ENCODE measurements at regions of chr6 and their contacts with region 1.

Region 1: GRCh38 chr6:30102970-30103874 is 9.7 kb downstream of the TRIM31 start:
- DNase-seq: peak; percentile 90
- ATAC-seq: peak; percentile 68
- H3K4me3 ChIP-seq: peak overlapping the region; percentile 63 to 77 (median 63)
- H3K27ac ChIP-seq: peak overlapping the region; percentile 79
- H3K4me1 ChIP-seq: peaks cover 56% of the 10 kb centered on the region
- H3K27me3 ChIP-seq: no peaks in the 10 kb centered on the region; a peak in 1 of 5 replicates
- CTCF ChIP-seq: peak; percentile 99
- EP300 ChIP-seq: no peak; a peak in 1 of 4 replicates
- POLR2A ChIP-seq: peak; percentile 42 to 79; a peak in 3 of 4 replicates
- RAD21 ChIP-seq: peak; percentile 96

Region 2: DNA sequence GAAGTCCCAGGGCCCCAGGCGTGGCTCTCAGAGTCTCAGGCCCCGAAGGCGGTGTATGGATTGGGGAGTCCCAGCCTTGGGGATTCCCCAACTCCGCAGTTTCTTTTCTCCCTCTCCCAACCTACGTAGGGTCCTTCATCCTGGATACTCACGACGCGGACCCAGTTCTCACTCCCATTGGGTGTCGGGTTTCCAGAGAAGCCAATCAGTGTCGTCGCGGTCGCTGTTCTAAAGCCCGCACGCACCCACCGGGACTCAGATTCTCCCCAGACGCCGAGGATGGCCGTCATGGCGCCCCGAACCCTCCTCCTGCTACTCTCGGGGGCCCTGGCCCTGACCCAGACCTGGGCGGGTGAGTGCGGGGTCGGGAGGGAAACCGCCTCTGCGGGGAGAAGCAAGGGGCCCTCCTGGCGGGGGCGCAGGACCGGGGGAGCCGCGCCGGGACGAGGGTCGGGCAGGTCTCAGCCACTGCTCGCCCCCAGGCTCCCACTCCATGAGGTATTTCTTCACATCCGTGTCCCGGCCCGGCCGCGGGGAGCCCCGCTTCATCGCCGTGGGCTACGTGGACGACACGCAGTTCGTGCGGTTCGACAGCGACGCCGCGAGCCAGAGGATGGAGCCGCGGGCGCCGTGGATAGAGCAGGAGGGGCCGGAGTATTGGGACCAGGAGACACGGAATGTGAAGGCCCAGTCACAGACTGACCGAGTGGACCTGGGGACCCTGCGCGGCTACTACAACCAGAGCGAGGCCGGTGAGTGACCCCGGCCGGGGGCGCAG is 160.8 kb before region 1 on chr6 and contains the start of gene HLA-A:
- CTCF ChIA-PET with region 1: no interaction called
- POLR2A ChIA-PET with region 1: no interaction called
- in situ Hi-C with region 1: no loop called
- intact Hi-C with region 1: loop called (anchors 1 kb)
- DNase-seq: peak; percentile 94
- ATAC-seq: peak; percentile 98
- H3K4me3 ChIP-seq: peak within 1 kb of the TSS; percentile 77 to 82 (median 80)
- H3K27ac ChIP-seq: peak within 1 kb of the TSS; percentile 60
- H3K4me1 ChIP-seq: peaks cover 28% of the 10 kb centered on the region
- H3K27me3 ChIP-seq: no peaks in the 10 kb centered on the region
- CTCF ChIP-seq: no peak
- EP300 ChIP-seq: no peak
- POLR2A ChIP-seq: peak; percentile 87 to 90
- RAD21 ChIP-seq: no peak
- total RNA-seq, gene HLA-A: 131 and 345 TPM in 2 replicates

Region 3: DNA sequence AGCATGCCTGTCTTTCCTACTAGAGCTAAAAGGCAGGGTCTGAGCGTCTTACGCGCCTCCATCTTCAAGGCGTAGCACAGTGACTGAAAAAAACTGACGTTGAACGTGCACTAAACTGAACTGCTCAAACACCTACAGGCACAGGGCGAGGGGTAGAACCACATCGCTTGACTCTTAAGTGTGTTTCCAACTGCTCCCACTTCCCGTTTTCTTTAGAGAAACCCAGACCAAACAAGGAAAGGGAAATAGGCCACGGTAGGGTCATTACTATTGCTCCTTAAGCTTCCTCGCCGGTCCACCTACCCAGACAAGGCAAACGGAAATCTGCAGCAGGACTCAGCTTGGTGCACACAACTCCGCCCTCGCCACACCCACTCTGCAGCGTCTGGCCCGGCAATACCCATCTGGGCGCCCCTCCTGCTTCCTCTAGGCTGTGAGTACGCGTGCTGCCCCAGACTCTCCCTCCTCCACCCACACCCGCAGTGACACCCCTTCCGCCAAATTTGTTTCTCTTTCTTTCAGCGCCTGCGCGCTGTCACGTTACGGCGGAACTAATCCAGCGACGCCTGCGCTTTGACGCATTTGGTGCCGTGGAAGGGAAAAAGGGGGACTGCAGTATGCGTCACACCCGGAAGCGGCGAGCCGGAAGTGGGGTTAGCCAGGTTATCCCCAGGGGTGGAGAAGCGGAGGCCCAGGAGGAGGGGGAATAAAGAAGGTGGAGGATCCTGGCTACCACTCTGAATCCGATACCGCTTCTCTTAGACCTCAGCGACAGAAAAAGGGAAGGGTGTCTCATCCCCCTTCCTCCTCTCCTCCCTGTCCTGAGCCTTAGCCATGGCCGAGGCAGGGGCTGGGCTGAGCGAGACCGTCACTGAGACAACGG is 36.4 kb before region 1 on chr6 and contains the start of gene PPP1R11:
- CTCF ChIA-PET with region 1: no interaction called
- POLR2A ChIA-PET with region 1: interaction called, 35 read pairs
- in situ Hi-C with region 1: no loop called
- intact Hi-C with region 1: loop called (anchors 2 kb)
- DNase-seq: peak; percentile 99
- ATAC-seq: peak; percentile 99
- H3K4me3 ChIP-seq: peak within 1 kb of the TSS; percentile 70 to 82 (median 75)
- H3K27ac ChIP-seq: peak within 1 kb of the TSS; percentile 66
- H3K4me1 ChIP-seq: peaks cover 36% of the 10 kb centered on the region
- H3K27me3 ChIP-seq: no peaks in the 10 kb centered on the region; a peak in 1 of 5 replicates
- CTCF ChIP-seq: no peak
- EP300 ChIP-seq: no peak; a peak in 1 of 4 replicates
- POLR2A ChIP-seq: peak; percentile 65 to 85
- RAD21 ChIP-seq: peak; percentile 3; the same call in 1 of the 2 replicates
- total RNA-seq, gene PPP1R11: 32.1 and 33.1 TPM in 2 replicates

Region 4: DNA sequence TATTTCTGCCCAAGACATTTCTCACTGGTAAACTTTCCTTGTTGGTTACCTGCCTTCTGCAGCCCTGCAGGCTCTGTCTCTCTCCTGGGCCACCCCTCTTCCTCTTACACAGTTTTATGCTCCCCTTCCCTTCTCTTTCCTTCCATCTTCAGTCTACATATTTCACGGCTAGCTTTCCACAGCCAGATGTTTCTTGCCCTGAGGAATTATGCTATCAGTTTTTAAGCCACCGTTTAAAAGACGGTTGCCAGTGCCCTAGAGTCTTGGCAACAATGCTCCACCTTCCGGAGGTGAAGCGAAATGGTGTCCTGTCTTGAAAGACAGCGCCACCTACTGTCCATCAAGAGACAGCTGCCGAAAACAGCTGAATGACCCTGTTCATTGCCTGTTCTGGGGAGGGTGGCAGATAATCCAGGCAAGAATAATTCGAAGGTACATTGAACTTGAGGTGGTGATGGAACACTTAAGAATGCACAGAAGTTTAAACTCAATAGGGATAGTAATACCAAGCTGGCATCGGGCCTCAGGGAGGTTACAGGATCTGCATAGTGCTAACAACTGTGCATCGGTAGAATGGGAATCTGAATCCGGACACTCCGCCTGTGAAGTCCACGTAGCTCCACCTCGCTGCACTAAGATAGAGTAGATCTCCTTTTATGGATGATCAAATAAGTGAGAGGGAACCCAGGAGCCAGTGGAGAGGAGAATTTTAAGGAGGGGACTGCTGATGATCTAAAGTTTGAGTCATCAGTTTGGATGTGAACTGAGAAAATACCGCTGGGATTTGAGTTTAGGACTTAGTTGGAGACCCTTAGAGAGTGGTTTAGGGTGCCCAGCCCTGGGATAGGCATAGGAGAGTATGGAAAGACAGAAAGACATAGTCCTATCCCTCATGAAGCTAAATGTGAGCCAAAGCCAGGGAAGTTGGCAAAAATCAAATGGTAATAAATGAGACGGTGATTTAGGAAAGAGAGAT is 28.0 kb after region 1 on chr6:
- CTCF ChIA-PET with region 1: interaction called, 140 read pairs
- POLR2A ChIA-PET with region 1: interaction called, 43 read pairs
- in situ Hi-C with region 1: no loop called
- intact Hi-C with region 1: loop called (anchors 1 kb)
- DNase-seq: peak; percentile 89
- ATAC-seq: peak; percentile 70
- H3K4me3 ChIP-seq: peak overlapping the region in 1 of 3 experiments; percentile 28; a peak in 2 of 6 replicates
- H3K27ac ChIP-seq: no peak overlapping the region
- H3K4me1 ChIP-seq: peaks cover 75% of the 10 kb centered on the region
- H3K27me3 ChIP-seq: no peaks in the 10 kb centered on the region
- CTCF ChIP-seq: peak; percentile 100
- EP300 ChIP-seq: no peak
- POLR2A ChIP-seq: no peak
- RAD21 ChIP-seq: peak; percentile 90

Region 5: DNA sequence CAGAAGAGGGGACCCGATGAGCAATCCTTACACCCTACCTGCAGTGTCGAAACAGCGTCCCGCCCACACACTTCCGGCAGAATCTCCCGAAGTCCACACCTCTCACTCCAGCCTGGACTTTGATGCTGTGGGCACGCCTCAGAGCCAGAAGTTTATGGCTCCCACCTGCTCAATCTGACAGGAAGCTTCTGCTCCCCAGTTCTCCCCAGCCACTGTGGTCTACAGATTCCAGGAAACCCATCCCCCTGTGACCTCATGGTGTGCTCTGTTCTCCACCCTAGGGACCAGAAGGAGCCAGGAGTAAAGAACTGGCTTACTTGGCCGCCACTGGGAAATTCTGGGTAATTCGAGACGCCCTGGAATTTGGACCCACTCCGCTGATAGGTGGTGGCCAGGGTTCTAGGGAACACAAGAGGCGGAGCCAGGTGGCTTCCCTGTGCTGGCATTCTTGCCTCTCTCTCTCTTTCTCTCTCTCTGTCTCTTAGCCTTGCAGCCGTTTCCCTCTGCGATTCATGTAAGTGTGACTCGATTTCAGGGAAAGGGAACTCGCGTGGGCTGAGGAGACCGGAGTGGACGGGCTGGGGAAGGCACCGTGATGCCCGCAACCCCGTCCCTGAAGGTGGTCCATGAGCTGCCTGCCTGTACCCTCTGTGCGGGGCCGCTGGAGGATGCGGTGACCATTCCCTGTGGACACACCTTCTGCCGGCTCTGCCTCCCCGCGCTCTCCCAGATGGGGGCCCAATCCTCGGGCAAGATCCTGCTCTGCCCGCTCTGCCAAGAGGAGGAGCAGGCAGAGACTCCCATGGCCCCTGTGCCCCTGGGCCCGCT is 60.1 kb after region 1 on chr6 and contains the start of gene TRIM15:
- CTCF ChIA-PET with region 1: interaction called, 3 read pairs
- POLR2A ChIA-PET with region 1: interaction called, 26 read pairs
- in situ Hi-C with region 1: no loop called
- intact Hi-C with region 1: loop called (anchors 1 kb)
- DNase-seq: peak; percentile 90
- ATAC-seq: peak; percentile 92
- H3K4me3 ChIP-seq: peak within 1 kb of the TSS; percentile 90 to 95 (median 92)
- H3K27ac ChIP-seq: peak within 1 kb of the TSS; percentile 87
- H3K4me1 ChIP-seq: peaks cover 55% of the 10 kb centered on the region
- H3K27me3 ChIP-seq: peaks cover 0 to 3% of the 10 kb centered on the region in 2 experiments; a peak in 1 of 5 replicates
- CTCF ChIP-seq: 0 out of 2 replicates have a peak, but pooled peaks have one; percentile 11
- EP300 ChIP-seq: no peak; a peak in 2 of 4 replicates
- POLR2A ChIP-seq: peak; percentile 80 to 85
- RAD21 ChIP-seq: 0 out of 2 replicates have a peak, but pooled peaks have one; percentile 7
- total RNA-seq, gene TRIM15: 30.4 and 35.1 TPM in 2 replicates

Region 6: DNA sequence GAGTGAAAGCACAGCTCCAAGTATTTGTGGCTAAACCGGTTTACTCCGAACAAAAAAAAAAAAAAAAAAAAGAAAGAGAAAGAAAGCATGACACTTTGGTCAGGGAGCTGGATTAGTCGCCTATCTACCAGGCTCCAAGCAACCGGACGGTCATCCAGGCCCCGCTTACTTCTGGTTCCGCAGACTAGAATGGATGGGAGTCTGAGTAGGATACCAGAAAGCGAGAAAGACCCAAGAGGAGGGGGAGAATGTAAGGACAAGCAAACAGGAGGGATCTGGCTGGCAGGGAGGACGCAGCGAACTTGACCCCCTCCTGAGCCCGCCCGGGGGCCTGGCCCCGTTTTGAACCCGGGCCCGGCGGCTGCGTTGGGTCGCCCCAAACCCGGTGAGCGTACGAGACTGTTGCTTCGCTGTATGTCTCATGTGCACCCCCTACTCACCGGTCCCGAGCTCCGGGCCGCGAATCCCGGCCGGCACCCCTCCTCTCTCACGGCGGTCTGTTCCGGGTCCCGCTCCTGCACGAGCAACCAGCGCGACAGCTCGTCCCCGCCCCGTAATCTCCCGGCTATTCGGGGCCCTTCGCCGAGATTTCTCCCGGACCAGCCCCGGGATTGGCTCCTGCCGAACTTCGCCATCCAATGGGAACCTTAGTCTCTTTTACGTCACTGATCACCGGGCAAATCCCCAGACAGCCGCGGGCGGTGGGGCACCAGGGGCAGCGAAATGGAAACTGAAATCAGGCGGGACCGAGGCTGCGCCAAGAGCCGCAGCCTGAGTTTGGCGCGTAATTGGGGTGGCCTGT is 109.8 kb after region 1 on chr6 and contains the start of gene TRIM26:
- CTCF ChIA-PET with region 1: interaction called, 4 read pairs
- POLR2A ChIA-PET with region 1: interaction called, 18 read pairs
- in situ Hi-C with region 1: no loop called
- intact Hi-C with region 1: no loop called
- DNase-seq: peak; percentile 97
- ATAC-seq: peak; percentile 94
- H3K4me3 ChIP-seq: peak within 1 kb of the TSS; percentile 92 to 99 (median 95)
- H3K27ac ChIP-seq: peak within 1 kb of the TSS; percentile 93
- H3K4me1 ChIP-seq: peaks cover 50% of the 10 kb centered on the region
- H3K27me3 ChIP-seq: peaks cover 0 to 2% of the 10 kb centered on the region in 2 experiments; a peak in 1 of 5 replicates
- CTCF ChIP-seq: no peak; the same call in 1 of the 2 replicates
- EP300 ChIP-seq: peak in 1 of 2 experiments; percentile 66; a peak in 2 of 4 replicates
- POLR2A ChIP-seq: peak; percentile 84 to 94
- RAD21 ChIP-seq: peak; percentile 43; the same call in 1 of the 2 replicates
- total RNA-seq, gene TRIM26: 38.7 and 46.2 TPM in 2 replicates

Measured in HepG2 (cell line).